ENCODE measurements at regions of chr3 and their contacts with region 1.

Region 1: DNA sequence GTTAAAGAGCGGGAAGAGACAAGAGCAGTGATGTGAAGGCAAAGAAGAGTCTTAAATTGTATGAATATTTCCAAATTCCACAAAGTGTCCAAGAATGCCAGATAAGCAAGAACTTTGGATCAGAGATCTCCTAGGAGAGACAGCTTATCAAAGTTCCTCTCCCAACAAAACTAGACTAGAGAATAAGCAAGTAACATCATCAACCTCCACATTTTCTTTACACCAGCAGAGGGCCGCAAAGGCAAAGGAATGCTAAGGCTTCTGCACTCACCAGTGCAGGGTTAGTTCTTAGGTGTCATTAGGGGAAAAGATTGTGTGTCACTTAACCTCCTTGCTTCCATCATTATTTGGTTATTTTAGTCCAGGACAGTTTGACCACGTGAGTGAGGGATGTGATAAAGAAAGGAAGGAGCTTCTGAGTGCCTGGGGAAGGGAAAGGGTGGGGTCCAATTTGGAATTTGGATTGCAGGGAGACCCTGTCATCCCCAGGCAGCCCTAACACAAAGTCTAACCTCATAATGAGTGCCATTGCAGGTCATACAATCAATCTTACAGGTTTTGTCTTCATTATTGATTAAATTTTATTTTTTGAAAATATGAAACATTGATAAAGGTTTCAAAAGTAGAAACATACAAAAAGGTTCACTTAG is 7.5 kb upstream of the CMTM6 start:
- DNase-seq: no peak
- ATAC-seq: peak; percentile 96
- H3K4me3 Mint-ChIP-seq: no peak overlapping the region
- H3K27ac Mint-ChIP-seq: peak overlapping the region; percentile 47
- H3K4me1 Mint-ChIP-seq: peaks cover 5% of the 10 kb centered on the region
- H3K27me3 Mint-ChIP-seq: no peaks in the 10 kb centered on the region
- CTCF ChIP-seq: peak; percentile 42

Region 2: DNA sequence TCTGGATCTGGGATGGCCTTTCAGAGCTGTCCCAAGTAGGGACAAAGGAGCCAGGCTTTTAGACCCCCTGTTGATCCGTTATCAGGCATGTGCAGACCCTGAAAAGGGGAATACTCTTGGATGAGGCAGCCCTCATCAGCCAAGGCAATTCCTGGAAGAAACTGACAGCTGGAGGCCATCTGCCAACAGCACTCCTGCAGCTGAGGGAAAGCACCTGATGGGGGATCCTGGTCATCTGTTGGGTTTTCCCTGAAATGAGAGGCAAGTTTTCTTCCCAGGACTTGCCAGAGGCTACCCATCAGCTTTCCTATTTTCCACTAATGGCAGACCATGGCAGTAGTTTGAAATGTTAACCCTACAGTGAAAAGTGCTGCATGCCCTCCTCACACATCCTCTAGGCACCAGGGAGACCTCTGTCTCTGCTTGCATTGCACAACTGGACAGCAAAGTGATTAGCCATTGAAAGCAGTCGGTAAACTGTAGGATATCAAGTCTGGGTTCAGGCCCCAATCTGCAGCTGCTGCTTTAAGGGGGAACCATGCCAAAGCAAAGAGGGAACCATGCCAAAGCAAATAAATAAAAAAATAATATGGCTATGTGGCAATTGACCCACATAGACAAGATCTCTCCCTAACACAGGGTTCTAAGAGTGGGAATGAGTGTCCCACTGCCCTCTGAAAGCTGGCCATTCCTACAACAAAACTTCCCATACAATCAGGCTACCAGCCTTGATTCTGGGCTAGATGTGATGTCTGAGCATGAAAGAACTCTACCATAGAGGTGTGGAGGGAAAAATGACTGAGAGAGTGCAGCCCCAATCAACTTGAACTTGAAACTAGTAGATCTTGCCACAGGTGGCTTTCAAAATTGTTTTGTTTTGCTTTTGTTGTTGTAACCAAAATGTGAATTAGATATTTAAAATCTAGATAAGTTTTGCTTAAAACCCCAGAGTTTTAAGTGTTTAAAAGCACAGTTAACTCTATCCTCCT is 1209.5 kb before region 1 on chr3:
- CTCF ChIA-PET with region 1: no interaction called
- POLR2A ChIA-PET with region 1: no interaction called
- intact Hi-C with region 1: no loop called
- DNase-seq: no peak
- ATAC-seq: no peak
- H3K4me3 Mint-ChIP-seq: no peak overlapping the region
- H3K27ac Mint-ChIP-seq: no peak overlapping the region
- H3K4me1 Mint-ChIP-seq: no peaks in the 10 kb centered on the region
- H3K27me3 Mint-ChIP-seq: peaks cover 2% of the 10 kb centered on the region
- CTCF ChIP-seq: no peak

Region 3: DNA sequence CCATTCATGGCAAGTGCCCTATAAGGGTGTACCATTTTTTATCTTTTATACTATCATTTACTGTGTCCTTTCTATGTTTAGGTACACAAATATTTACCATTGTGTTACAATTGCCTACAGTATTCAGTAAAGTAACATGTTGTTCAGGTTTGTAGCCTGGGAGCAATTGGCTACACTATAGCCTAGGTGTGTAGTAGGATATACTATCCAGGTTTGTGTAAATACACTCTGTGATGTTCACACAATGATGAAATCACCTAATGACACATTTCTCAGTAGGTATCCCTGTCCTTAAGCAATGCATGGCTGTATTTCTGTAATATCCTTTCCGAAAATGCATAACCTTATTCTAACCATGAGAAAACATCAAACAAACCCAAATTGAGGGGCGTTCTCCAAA is 156.9 kb after region 1 on chr3:
- CTCF ChIA-PET with region 1: interaction called, 10 read pairs
- POLR2A ChIA-PET with region 1: interaction called, 3 read pairs
- intact Hi-C with region 1: loop called (anchors 1 kb)
- DNase-seq: no peak
- ATAC-seq: no peak
- H3K4me3 Mint-ChIP-seq: no peak overlapping the region
- H3K27ac Mint-ChIP-seq: no peak overlapping the region
- H3K4me1 Mint-ChIP-seq: no peaks in the 10 kb centered on the region
- H3K27me3 Mint-ChIP-seq: peaks cover 6% of the 10 kb centered on the region
- CTCF ChIP-seq: no peak

Region 4: DNA sequence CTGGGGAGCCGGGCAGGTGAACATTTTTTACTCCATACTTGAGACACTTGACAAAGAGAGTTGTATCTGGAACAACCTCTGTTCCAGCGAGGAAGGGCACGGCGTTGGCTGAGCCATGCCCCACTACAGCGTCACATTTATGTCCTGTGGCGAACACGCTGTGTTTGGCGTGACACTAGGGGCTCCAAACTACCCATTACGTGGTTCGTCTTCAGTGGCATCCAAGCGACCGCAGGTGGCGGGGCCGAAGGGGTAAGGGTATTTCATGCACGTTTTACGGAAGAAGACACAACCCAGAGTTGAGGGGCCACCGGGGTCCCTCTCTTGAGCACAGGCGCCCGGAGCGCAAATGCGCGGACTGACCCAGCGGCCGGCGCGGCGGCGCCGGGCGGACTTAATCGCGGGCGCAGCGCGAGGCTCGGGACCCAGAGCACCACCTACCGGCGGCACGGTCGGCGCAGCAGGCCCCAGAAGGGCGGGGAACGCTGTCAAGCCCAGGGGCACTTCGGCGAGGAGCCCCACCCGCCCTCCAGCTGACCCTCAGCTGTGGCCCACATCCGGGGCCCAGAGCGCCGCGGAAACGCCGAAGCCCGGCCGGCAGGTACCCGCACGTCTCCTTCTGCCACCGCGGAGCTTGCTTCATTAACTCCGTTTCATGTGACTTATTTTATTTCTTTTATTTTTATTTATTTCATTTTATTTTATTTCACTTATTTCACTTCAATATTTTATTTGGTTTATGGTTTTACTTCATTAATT is 271.2 kb after region 1 on chr3:
- CTCF ChIA-PET with region 1: interaction called, 3 read pairs
- POLR2A ChIA-PET with region 1: no interaction called
- intact Hi-C with region 1: loop called (anchors 1 kb)
- DNase-seq: peak; percentile 71
- ATAC-seq: peak; percentile 91
- H3K4me3 Mint-ChIP-seq: peak overlapping the region; percentile 90
- H3K27ac Mint-ChIP-seq: no peak overlapping the region
- H3K4me1 Mint-ChIP-seq: peaks cover 5% of the 10 kb centered on the region
- H3K27me3 Mint-ChIP-seq: no peaks in the 10 kb centered on the region
- CTCF ChIP-seq: peak; percentile 80

Region 5: DNA sequence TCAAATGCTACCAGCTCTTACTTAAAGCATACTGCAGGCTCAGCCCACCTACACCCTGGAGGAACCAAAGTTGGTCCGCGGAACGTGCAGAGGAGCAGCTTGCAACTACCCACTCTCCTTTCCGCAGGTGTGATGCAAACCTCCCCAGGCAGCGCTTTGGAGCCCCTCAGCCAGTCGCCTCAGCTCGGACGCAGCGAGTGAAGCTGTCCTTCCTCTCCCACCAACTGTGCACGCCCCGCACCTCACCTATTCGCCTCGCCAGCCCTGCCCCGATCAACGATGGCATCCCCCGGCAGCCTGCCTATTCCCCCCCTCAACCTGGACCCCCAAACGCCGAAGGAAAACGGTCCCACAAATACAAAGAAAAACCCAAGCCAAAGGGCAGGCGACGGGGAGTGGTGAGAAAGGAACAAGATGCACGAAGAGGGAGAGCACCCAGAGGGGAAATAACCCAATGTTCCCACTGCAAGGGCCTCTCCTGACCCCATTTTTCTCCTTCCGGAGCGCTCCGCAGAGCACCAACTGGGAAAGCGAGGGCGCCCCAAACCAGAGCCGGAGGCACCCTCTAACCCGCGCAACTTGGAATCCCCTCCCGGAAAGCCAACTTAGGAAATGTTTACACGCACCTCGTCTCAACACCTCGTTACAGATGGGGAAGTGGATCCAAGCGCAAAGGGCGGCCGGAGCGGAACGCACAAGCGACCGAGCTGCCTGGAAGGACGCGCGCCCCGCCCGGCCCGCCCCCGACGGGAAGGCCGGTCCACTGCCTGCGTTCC is 586.1 kb after region 1 on chr3:
- CTCF ChIA-PET with region 1: no interaction called
- POLR2A ChIA-PET with region 1: no interaction called
- intact Hi-C with region 1: loop called (anchors 10 kb)
- DNase-seq: peak; percentile 58
- ATAC-seq: peak; percentile 68
- H3K4me3 Mint-ChIP-seq: peak overlapping the region; percentile 98
- H3K27ac Mint-ChIP-seq: peak overlapping the region; percentile 94
- H3K4me1 Mint-ChIP-seq: peaks cover 41% of the 10 kb centered on the region
- H3K27me3 Mint-ChIP-seq: no peaks in the 10 kb centered on the region
- CTCF ChIP-seq: no peak